Cardiac septum (tissue), 1 donor: ENCODE measurements at regions of chr19 and their contacts with region 1.

Region 1: GRCh38 chr19:14419106-14419813 is at the start of gene DDX39A:
- DNase-seq: peak; percentile 99
- total RNA-seq, gene DDX39A: 26.7 TPM

Region 2: DNA sequence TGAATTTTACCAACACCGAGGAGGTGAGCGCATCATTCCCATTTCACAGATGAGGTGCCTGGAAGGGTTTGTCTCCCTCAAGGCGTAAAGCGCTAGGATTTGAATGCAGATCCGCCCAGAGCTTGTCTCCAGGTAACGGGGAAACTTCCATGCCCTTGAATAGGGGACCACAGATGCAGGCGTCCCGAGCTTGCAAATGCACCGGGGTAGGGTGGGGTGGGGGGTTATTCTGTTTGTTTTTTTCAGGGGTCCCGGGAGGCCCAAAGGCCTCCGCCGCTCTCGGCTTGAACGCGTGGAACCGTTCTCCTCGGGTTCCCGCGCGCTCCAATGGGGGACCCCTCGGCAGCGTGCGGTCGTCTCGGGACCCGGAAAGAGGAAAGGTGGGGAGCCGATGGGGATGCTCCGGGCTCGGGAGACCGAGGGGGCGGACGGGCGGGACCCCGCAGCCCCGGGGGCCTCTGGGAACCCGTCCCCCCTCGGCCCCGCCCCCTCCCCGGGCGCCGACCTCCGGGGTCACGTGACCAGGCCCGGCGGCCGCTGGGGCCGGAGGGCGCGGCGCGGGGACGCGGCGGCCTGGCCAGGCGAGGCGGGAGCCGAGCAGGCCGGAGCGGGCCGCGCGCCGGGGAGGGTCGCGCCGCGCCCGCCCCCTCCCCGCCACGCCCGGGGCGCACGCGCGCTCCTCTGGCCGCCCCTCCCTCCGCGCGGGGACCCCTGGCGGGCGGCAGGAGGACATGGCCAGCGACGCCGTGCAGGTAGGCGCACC is 13.7 kb after region 1 on chr19 and contains the start of gene PKN1:
- intact Hi-C with region 1: loop called (anchors 1 kb)
- DNase-seq: peak; percentile 79
- total RNA-seq, gene PKN1: 136 TPM

Region 3: GRCh38 chr19:14459703-14460102 is 40.4 kb after region 1 on chr19:
- intact Hi-C with region 1: no loop called
- DNase-seq: no peak